ENCODE measurements at regions of chr2 and their contacts with region 1.

Region 1: DNA sequence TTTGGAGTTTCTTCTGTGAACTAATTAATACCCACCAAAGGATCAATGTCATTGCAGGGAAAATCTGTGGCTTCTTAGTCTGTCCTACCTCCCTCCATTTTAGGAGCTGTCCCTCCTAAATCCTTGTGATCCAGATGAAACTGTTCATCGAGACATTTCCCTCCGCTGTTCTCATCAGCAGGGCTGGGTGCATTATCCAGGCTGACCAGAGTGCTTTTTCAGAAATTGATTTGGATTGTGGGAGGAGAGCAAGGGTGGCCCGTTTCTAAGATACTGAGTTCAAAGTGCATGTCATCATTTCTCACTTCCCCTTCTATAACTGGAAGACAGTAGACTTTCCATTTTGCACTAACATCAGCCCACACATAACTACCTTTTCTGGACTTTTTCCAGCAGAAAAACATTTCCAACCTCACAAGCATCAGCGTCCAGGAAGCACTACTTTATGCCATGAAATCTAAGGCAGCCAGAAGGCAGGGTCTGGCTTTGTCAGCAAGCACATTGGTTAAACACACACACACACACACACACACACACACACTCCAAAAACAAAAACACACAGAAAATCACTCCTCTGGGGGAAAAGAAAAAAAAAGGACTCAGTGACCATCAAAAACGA is 94.1 kb downstream of the ANKRD44 start:
- DNase-seq: no peak
- H3K4me3 Mint-ChIP-seq: peak overlapping the region; percentile 69
- H3K27ac Mint-ChIP-seq: peak overlapping the region; percentile 97
- H3K4me1 Mint-ChIP-seq: peaks cover 94% of the 10 kb centered on the region
- H3K27me3 Mint-ChIP-seq: no peaks in the 10 kb centered on the region

Region 2: GRCh38 chr2:197028230-197028629 is 188.2 kb before region 1 on chr2:
- CTCF ChIA-PET with region 1: no interaction called
- intact Hi-C with region 1: no loop called
- DNase-seq: no peak
- H3K4me3 Mint-ChIP-seq: no peak overlapping the region
- H3K27ac Mint-ChIP-seq: peak overlapping the region; percentile 42
- H3K4me1 Mint-ChIP-seq: peaks cover 14% of the 10 kb centered on the region
- H3K27me3 Mint-ChIP-seq: no peaks in the 10 kb centered on the region

Region 3: GRCh38 chr2:197198890-197199289 is 17.6 kb before region 1 on chr2:
- CTCF ChIA-PET with region 1: interaction called, 34 read pairs
- intact Hi-C with region 1: loop called (anchors 1 kb)
- DNase-seq: peak; percentile 93
- H3K4me3 Mint-ChIP-seq: peak overlapping the region; percentile 83
- H3K27ac Mint-ChIP-seq: peak overlapping the region; percentile 96
- H3K4me1 Mint-ChIP-seq: peaks cover 86% of the 10 kb centered on the region
- H3K27me3 Mint-ChIP-seq: no peaks in the 10 kb centered on the region

Region 4: DNA sequence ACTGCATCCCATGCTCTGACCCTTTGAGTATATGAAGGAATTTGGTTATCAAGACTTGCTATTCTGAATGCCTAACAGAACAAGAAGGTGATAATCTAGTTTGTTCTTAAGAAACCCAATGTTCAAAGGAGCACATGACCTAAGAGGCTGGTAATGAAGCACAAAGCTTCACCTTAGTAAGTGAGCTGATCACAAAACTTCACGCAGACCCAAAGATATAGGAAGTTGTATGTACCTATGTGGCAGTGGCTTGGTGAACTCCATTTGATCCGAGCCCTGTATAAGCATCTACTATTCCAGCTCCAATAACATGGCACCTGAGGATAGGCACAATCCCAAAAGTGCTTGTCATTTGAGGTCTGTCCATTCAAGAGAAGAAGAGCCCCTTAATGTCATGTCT is 15.5 kb after region 1 on chr2:
- CTCF ChIA-PET with region 1: interaction called, 5 read pairs
- intact Hi-C with region 1: loop called (anchors 1 kb)
- DNase-seq: no peak
- H3K4me3 Mint-ChIP-seq: no peak overlapping the region
- H3K27ac Mint-ChIP-seq: peak overlapping the region; percentile 77
- H3K4me1 Mint-ChIP-seq: peaks cover 95% of the 10 kb centered on the region
- H3K27me3 Mint-ChIP-seq: no peaks in the 10 kb centered on the region

Region 5: GRCh38 chr2:197239434-197239833 is 23.0 kb after region 1 on chr2:
- CTCF ChIA-PET with region 1: interaction called, 4 read pairs
- intact Hi-C with region 1: loop called (anchors 1 kb)
- DNase-seq: no peak
- H3K4me3 Mint-ChIP-seq: peak overlapping the region; percentile 78
- H3K27ac Mint-ChIP-seq: peak overlapping the region; percentile 91
- H3K4me1 Mint-ChIP-seq: peaks cover 85% of the 10 kb centered on the region
- H3K27me3 Mint-ChIP-seq: no peaks in the 10 kb centered on the region

Region 6: DNA sequence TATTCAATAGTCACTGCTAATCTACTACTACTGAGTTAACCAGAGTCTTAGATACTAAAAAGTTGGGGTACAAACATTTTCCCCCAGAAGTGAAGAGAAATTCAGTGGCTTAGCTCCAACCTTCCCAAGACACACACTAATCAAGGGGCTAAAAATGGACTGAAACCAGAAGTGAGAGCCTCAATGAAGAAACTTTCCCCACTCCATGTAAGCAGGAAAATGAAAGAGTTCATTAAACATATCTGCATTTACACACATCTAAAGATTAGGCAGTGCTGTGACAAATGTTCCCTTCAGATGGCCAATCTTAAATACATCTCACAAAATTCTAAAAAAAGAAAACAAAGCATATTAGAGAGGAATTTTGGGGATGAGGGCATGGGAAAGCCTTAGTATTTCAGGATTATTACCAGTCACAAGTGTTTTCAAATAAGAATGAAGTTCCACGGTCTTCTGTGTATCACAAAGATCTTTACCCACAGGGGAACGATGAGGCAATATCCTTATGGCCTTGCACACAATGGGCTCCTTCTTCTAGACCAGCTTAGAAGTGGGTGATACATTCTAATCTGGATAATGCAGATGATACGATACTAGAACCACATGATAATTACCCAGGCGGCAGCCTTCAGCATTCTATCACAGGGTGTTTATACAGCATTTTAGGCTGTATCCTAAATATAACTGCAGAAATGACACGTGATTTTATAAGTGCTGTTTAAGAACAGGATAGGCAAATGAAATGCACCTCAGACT is 77.0 kb after region 1 on chr2:
- CTCF ChIA-PET with region 1: no interaction called
- intact Hi-C with region 1: loop called (anchors 1 kb)
- DNase-seq: peak; percentile 48
- H3K4me3 Mint-ChIP-seq: peak overlapping the region; percentile 57
- H3K27ac Mint-ChIP-seq: peak overlapping the region; percentile 92
- H3K4me1 Mint-ChIP-seq: peaks cover 87% of the 10 kb centered on the region
- H3K27me3 Mint-ChIP-seq: no peaks in the 10 kb centered on the region

Region 7: DNA sequence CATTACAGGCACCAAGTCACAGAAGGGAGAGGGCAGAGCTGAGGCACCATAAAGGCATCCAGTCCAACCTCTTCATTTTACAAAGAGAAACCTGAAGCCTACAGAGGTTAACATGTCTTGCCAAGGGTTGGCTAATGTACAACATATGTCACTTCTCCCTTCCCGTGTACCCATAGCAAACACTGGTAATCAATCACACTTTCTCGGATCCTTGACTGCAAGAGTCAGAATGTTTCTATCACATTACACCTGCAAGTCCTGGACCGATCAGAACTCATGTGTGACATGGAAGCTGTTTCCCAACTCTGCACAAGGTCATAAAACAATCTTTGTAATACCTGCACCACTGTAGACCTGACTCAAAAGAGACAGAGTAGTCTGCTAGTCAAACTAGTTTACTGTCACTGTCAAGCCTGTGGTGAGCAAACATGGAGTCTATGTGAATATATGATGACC is 88.1 kb after region 1 on chr2:
- CTCF ChIA-PET with region 1: interaction called, 3 read pairs
- intact Hi-C with region 1: loop called (anchors 1 kb)
- DNase-seq: peak; percentile 68
- H3K4me3 Mint-ChIP-seq: peak overlapping the region; percentile 77
- H3K27ac Mint-ChIP-seq: peak overlapping the region; percentile 96
- H3K4me1 Mint-ChIP-seq: peaks cover 68% of the 10 kb centered on the region
- H3K27me3 Mint-ChIP-seq: no peaks in the 10 kb centered on the region

Measured in activated naive CD4-positive, alpha-beta T cell treated with anti-CD3 and anti-CD28 coated beads for 36 hours (primary cell).